Common myeloid progenitor, CD34-positive (primary cell): ENCODE measurements at regions of chr10 and their contacts with region 1.

Region 1: DNA sequence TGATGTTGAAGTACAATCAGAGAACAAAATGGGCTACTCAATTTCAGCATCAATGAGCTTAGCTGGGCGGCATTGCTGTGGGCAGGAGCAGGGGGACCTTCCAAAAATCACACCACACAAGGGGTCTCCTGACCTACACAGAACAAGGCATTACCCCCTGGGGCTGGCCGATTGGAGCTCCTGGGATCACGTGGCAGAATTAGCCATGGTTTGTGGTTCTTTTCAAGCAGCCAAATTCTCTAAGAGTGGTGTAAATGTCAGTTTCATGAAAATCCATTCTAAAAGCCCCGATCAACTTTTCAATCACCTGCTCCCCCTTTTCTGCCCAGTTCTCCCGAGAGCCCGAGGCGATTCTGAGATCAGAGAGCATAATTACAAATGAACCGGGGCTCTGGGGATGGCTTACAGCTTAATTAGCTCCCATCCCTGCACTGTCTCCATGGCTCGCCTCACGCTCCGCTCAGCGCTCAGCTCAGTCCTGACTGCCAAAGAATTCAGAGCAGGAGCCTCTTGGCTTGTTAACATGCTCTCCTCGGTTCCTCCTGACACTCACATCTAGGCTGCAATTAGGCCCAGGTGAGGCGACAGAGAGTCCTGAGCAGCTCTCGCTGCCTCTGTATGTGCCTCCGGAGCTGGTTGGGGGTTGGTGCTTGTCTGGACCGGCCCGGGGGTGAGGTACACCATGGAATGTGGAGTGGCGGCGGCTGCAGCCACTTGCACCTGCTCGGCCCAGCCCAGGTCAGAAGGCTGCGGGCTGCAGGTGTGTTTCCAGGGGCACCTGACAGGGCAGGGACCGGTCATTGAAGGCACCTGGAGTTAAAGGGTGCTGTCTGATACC is 111.8 kb downstream of the WDR11 start:
- DNase-seq: no peak
- H3K4me3 ChIP-seq: no peak overlapping the region
- H3K27ac ChIP-seq: no peak overlapping the region
- H3K4me1 ChIP-seq: no peaks in the 10 kb centered on the region
- H3K27me3 ChIP-seq: peaks cover 0 to 33% (median 11%) of the 10 kb centered on the region in 5 experiments

Region 2: GRCh38 chr10:120948889-120949608 is 13.9 kb before region 1 on chr10:
- CTCF ChIA-PET with region 1: interaction called, 12 read pairs
- POLR2A ChIA-PET with region 1: no interaction called
- DNase-seq: peak; percentile 62 to 81 (median 80)
- H3K4me3 ChIP-seq: peak overlapping the region; percentile 30 to 78 (median 61)
- H3K27ac ChIP-seq: no peak overlapping the region
- H3K4me1 ChIP-seq: peaks cover 0 to 13% (median 10%) of the 10 kb centered on the region in 4 experiments
- H3K27me3 ChIP-seq: peaks cover 5 to 48% (median 26%) of the 10 kb centered on the region in 5 experiments